Transverse colon (tissue), 4 donors: ENCODE measurements at regions of chr12 and their contacts with region 1.

Region 1: GRCh38 chr12:92224685-92225331 is 79.2 kb upstream of the BTG1 start:
- DNase-seq: no peak
- H3K4me3 ChIP-seq: no peak overlapping the region
- H3K27ac ChIP-seq: no peak overlapping the region
- H3K4me1 ChIP-seq: peaks cover 0 to 11% (median 0%) of the 10 kb centered on the region in 4 donors
- H3K27me3 ChIP-seq: no peaks in the 10 kb centered on the region
- CTCF ChIP-seq: no peak
- EP300 ChIP-seq: no peak
- POLR2A ChIP-seq: no peak

Region 2: DNA sequence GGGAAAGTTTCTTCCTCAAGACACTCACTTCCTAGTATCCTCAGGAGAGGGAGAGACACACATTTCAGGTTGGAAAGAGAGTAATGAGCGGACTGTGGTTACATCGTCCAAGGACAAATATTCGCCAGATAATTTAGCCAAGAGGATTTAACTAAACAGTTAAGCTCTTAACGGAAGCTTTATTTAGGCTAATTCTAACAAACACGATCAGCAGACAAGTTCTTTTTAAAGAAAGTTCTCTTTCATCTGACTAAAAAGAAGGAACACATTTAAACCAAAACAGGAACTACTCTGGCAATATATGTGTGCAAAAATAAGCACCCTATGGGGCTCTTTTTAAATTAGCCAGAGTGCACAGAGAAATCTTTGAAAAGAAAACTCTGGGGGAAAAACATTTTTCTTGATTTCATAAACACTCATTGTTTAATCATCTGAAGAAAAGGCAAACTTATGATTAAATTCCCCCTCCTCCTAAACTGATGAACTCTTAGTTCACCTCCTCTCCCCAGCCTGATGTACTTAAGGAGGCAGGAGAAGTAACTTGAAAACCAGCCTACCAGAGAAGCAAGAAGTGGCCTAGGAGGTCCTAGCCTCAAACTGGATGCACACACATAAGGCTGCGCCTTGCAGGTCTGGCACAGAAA is 65.9 kb before region 1 on chr12:
- in situ Hi-C with region 1: no loop called
- intact Hi-C with region 1: loop called (anchors 10 kb)
- DNase-seq: no peak
- H3K4me3 ChIP-seq: no peak overlapping the region
- H3K27ac ChIP-seq: peak overlapping the region in 1 of 4 donors; percentile 40
- H3K4me1 ChIP-seq: peaks cover 0 to 14% (median 2%) of the 10 kb centered on the region in 4 donors
- H3K27me3 ChIP-seq: no peaks in the 10 kb centered on the region
- CTCF ChIP-seq: no peak
- EP300 ChIP-seq: no peak
- POLR2A ChIP-seq: no peak